HepG2 (cell line): ENCODE measurements at regions of chr19 and their contacts with region 1.

Region 1: DNA sequence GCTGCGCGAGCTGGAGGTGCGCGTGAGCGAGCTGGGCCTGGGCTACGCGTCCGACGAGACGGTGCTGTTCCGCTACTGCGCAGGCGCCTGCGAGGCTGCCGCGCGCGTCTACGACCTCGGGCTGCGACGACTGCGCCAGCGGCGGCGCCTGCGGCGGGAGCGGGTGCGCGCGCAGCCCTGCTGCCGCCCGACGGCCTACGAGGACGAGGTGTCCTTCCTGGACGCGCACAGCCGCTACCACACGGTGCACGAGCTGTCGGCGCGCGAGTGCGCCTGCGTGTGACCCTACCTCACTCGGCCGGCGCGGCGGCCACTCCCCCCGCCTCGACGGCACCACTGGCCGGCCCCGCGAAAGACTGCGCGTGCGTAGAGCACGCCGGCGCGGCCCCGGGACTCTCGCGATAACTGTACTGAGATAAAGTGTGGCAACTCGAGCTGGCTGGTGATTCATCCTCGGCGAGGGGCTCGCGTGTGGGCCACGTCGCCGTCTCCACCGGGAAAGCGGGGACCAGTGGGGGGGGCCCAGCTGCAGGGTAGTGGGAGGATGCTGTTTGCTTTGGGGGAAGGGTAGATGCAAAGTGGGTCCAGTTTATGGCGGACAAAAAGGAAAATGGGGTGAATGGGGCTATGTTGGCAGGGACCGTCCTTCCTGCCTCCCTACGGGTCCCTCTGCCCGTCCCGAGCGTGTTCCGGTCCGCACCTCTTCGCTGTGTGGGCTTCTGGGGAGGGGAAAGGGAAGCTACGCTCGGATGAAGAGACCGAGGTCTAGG is 11.4 kb downstream of the FUT6 start:
- DNase-seq: peak; percentile 89
- ATAC-seq: peak; percentile 68
- H3K4me3 ChIP-seq: peak overlapping the region; percentile 73 to 90 (median 83)
- H3K27ac ChIP-seq: peak overlapping the region; percentile 89
- H3K4me1 ChIP-seq: peaks cover 55% of the 10 kb centered on the region
- H3K27me3 ChIP-seq: no peaks in the 10 kb centered on the region; a peak in 1 of 5 replicates
- CTCF ChIP-seq: peak; percentile 23; the same call in 1 of the 2 replicates
- EP300 ChIP-seq: no peak
- POLR2A ChIP-seq: peak; percentile 96 to 99
- RAD21 ChIP-seq: peak; percentile 8; the same call in 1 of the 2 replicates

Region 2: DNA sequence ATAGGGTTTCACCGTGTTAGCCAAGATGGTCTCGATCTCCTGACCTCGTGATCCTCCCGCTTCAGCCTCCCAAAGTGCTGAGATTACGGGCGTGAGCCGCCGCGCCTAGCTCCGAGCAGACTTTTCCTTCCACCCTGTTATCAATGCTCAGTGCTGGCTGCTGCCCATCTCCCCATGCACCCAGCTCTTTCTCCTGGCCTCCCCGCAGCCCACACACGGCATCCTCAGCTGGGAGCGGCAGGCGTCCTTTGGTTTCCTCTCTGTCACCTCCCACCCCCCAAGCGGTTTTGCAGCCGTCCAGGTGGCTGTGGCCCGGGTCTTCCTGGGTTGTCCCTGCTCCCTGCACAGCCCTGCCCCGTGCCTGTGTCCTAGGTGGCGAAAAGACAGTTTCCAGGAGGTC is 55.7 kb before region 1 on chr19:
- CTCF ChIA-PET with region 1: no interaction called
- POLR2A ChIA-PET with region 1: no interaction called
- in situ Hi-C with region 1: no loop called
- intact Hi-C with region 1: no loop called
- DNase-seq: no peak
- ATAC-seq: no peak
- H3K4me3 ChIP-seq: no peak overlapping the region
- H3K27ac ChIP-seq: no peak overlapping the region
- H3K4me1 ChIP-seq: peaks cover 14% of the 10 kb centered on the region
- H3K27me3 ChIP-seq: peaks cover 0 to 10% of the 10 kb centered on the region in 2 experiments; a peak in 4 of 5 replicates
- CTCF ChIP-seq: no peak
- EP300 ChIP-seq: no peak
- POLR2A ChIP-seq: no peak
- RAD21 ChIP-seq: no peak

Region 3: GRCh38 chr19:5803752-5804515 is 24.1 kb before region 1 on chr19:
- CTCF ChIA-PET with region 1: interaction called, 30 read pairs
- POLR2A ChIA-PET with region 1: interaction called, 46 read pairs
- in situ Hi-C with region 1: no loop called
- intact Hi-C with region 1: loop called (anchors 1 kb)
- DNase-seq: peak; percentile 83
- ATAC-seq: peak; percentile 88
- H3K4me3 ChIP-seq: peak overlapping the region; percentile 36 to 68 (median 42)
- H3K27ac ChIP-seq: no peak overlapping the region
- H3K4me1 ChIP-seq: peaks cover 67% of the 10 kb centered on the region
- H3K27me3 ChIP-seq: no peaks in the 10 kb centered on the region; a peak in 1 of 5 replicates
- CTCF ChIP-seq: peak; percentile 99
- EP300 ChIP-seq: peak; percentile 7 to 25; a peak in 1 of 4 replicates
- POLR2A ChIP-seq: peak in 1 of 2 experiments; percentile 42; a peak in 1 of 4 replicates
- RAD21 ChIP-seq: peak; percentile 100

Region 4: DNA sequence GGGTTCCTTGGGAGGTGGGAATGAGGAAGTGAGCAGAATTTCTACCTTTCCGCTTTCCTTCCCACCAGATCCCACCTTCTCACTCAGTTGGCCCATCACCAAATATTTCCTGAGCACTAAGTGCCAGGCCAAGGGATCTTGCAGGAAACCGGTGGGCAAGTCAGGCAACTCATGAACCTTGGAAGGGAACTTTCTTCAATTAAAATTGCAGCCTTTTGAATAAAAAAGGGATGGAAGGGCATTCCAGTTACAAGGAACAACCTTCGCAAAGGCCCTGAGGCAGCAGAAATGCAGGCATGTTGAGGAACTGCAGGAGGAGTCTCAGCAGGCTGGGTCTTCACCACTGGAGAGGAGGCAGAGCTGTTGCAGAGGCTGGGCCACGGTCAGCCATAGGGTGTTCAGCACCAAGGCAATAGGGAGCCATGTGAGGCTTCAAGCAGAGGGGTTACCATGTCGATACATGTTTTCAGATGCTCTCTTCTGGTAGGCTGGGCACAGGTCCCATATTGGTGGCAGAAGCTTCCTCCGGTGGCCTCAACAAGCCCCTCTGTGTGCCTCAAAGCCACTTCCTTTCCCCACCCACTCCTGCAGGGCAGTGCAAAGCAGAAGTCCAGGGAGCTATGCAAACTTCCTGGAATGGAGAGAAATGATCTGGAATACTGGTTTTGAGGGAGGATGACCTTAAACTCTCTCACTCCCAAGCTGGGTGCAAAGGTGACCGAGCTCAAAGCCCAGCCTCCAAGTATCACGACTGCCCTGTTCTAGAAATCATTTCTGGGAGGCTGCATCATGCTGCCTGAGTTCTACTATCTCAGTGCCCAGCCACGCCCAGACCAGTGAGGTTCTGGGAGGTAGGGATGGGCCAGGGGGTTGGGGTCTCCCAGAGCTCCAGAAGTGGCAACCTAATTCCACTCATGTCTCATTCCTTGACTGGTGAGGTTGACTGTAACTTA is 11.3 kb after region 1 on chr19 and contains the start of gene FUT6:
- CTCF ChIA-PET with region 1: no interaction called
- POLR2A ChIA-PET with region 1: interaction called, 96 read pairs
- in situ Hi-C with region 1: no loop called
- intact Hi-C with region 1: no loop called
- DNase-seq: peak; percentile 59
- ATAC-seq: peak; percentile 70
- H3K4me3 ChIP-seq: peak within 1 kb of the TSS; percentile 69 to 84 (median 75)
- H3K27ac ChIP-seq: peak within 1 kb of the TSS; percentile 80
- H3K4me1 ChIP-seq: peaks cover 58% of the 10 kb centered on the region
- H3K27me3 ChIP-seq: no peaks in the 10 kb centered on the region; a peak in 1 of 5 replicates
- CTCF ChIP-seq: 0 out of 2 replicates have a peak, but pooled peaks have one; percentile 6
- EP300 ChIP-seq: 0 out of 4 replicates have a peak, but pooled peaks of 1 of the 2 experiments have one; percentile 55
- POLR2A ChIP-seq: peak in 1 of 2 experiments; percentile 63; a peak in 2 of 4 replicates
- RAD21 ChIP-seq: no peak
- total RNA-seq, gene FUT6: 5.0 and 8.2 TPM in 2 replicates

Region 5: DNA sequence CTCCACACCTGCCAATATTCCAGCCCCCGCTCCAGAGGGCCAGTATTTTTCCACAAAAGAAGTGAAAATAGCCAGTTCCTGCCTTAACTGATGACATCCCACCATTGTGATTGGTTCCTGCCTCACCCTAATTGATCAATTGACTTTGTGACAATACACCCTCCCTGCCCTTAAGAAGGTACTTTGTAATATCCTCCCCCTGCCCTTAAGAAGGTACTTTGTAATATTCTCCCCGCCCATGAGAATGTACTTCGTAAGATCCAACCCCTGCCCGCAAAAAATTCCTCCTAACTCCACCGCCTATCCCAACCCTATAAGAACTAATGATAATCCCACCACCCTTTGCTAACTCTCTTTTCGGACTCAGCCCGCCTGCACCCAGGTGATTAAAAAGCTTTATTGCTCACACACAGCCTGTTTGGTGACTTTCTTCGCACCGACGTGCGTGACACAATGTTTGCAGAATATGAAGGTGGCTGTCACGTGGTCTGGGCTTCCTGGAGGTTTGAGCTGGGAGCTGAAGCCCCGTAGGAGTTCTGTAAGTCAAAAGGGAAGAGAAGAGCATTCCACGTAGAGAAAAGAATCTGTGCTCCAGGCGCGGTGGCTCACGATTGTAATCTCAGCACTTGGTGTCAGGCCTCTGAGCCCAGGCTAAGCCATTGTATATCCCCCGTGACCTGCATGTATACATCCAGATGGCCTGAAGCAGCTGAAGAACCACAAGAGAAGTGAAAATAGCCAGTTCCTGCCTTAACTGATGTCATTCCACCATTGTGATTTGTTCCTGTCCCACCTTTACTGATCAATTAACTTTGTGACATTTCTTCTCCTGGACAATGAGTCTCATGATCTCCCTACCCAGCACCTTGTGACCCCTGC is 29.4 kb after region 1 on chr19:
- CTCF ChIA-PET with region 1: no interaction called
- POLR2A ChIA-PET with region 1: interaction called, 29 read pairs
- in situ Hi-C with region 1: no loop called
- intact Hi-C with region 1: no loop called
- DNase-seq: no peak
- ATAC-seq: no peak
- H3K4me3 ChIP-seq: no peak overlapping the region
- H3K27ac ChIP-seq: no peak overlapping the region
- H3K4me1 ChIP-seq: peaks cover 51% of the 10 kb centered on the region
- H3K27me3 ChIP-seq: no peaks in the 10 kb centered on the region
- CTCF ChIP-seq: no peak
- EP300 ChIP-seq: no peak
- POLR2A ChIP-seq: no peak
- RAD21 ChIP-seq: no peak

Region 6: GRCh38 chr19:5870986-5871394 is 42.9 kb after region 1 on chr19:
- CTCF ChIA-PET with region 1: no interaction called
- POLR2A ChIA-PET with region 1: interaction called, 54 read pairs
- in situ Hi-C with region 1: no loop called
- intact Hi-C with region 1: loop called (anchors 5 kb)
- DNase-seq: peak; percentile 97
- ATAC-seq: peak; percentile 92
- H3K4me3 ChIP-seq: 0 out of 6 replicates have a peak overlapping the region, but pooled peaks of 1 of the 3 experiments have one; percentile 46
- H3K27ac ChIP-seq: peak overlapping the region; percentile 97
- H3K4me1 ChIP-seq: peaks cover 80% of the 10 kb centered on the region
- H3K27me3 ChIP-seq: no peaks in the 10 kb centered on the region
- CTCF ChIP-seq: peak; percentile 19; the same call in 1 of the 2 replicates
- EP300 ChIP-seq: peak; percentile 93 to 97
- POLR2A ChIP-seq: peak; percentile 55 to 56; a peak in 2 of 4 replicates
- RAD21 ChIP-seq: peak; percentile 47; the same call in 1 of the 2 replicates

Region 7: DNA sequence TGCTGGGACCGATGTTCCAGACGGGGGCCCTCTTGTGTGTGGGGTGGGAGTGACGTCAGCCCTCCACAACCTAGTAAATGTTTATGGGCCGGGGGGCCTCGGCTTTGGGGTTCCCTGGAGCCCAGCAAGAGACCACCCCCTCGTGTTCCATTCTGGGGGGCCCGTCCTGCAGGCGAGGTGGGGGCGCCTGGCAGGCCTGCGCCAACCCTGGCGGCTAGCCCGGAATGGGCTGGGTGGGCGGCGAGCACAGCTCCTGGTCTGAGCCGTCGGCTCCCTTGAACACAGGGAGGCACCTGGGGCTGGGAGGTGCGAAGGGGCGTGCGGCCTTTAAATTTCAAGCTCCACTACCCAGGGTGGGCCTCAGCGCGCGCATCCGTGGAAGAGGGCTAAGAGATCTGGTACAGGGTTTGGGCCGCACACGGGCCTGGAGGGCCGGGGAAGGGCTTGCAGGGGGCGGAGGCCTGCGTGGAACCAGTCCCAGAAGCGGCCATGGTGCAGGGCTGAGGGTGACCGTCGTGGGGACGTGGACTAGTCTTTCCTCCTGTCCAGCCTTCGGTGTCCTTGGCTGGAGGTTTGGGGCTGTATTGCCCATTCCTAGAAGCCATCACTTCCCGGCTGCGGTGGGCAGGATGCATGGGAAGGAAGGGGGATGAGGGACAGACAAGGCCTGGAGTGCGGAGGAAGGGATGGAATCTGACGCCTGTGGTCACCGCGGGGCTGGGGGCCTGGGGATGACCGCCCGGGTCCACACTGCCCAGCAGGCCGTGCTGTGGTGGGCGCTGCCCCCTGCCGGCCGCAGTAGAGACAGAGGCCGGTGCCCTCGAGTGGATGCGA is 64.1 kb after region 1 on chr19:
- CTCF ChIA-PET with region 1: interaction called, 5 read pairs
- POLR2A ChIA-PET with region 1: interaction called, 22 read pairs
- in situ Hi-C with region 1: no loop called
- intact Hi-C with region 1: loop called (anchors 1 kb)
- DNase-seq: no peak
- ATAC-seq: peak; percentile 81
- H3K4me3 ChIP-seq: peak overlapping the region in 1 of 3 experiments; percentile 14; a peak in 1 of 6 replicates
- H3K27ac ChIP-seq: no peak overlapping the region
- H3K4me1 ChIP-seq: peaks cover 44% of the 10 kb centered on the region
- H3K27me3 ChIP-seq: no peaks in the 10 kb centered on the region
- CTCF ChIP-seq: peak; percentile 98
- EP300 ChIP-seq: no peak
- POLR2A ChIP-seq: peak in 1 of 2 experiments; percentile 68; a peak in 2 of 4 replicates
- RAD21 ChIP-seq: peak; percentile 98

Region 8: GRCh38 chr19:5904352-5905113 is 76.5 kb after region 1 on chr19 and contains the start of gene VMAC:
- CTCF ChIA-PET with region 1: no interaction called
- POLR2A ChIA-PET with region 1: interaction called, 79 read pairs
- in situ Hi-C with region 1: no loop called
- intact Hi-C with region 1: no loop called
- DNase-seq: peak; percentile 100
- ATAC-seq: peak; percentile 85
- H3K4me3 ChIP-seq: peak within 1 kb of the TSS; percentile 78 to 100 (median 99)
- H3K27ac ChIP-seq: peak within 1 kb of the TSS; percentile 98
- H3K4me1 ChIP-seq: peaks cover 66% of the 10 kb centered on the region
- H3K27me3 ChIP-seq: peaks cover 0 to 4% of the 10 kb centered on the region in 2 experiments; a peak in 1 of 5 replicates
- CTCF ChIP-seq: no peak; the same call in 1 of the 2 replicates
- EP300 ChIP-seq: no peak
- POLR2A ChIP-seq: peak; percentile 62 to 80; a peak in 3 of 4 replicates
- RAD21 ChIP-seq: peak; percentile 71
- total RNA-seq, gene VMAC: 1.2 and 2.4 TPM in 2 replicates